Mammary epithelial cell (primary cell): ENCODE measurements at regions of chr9 and their contacts with region 1.

Region 1: DNA sequence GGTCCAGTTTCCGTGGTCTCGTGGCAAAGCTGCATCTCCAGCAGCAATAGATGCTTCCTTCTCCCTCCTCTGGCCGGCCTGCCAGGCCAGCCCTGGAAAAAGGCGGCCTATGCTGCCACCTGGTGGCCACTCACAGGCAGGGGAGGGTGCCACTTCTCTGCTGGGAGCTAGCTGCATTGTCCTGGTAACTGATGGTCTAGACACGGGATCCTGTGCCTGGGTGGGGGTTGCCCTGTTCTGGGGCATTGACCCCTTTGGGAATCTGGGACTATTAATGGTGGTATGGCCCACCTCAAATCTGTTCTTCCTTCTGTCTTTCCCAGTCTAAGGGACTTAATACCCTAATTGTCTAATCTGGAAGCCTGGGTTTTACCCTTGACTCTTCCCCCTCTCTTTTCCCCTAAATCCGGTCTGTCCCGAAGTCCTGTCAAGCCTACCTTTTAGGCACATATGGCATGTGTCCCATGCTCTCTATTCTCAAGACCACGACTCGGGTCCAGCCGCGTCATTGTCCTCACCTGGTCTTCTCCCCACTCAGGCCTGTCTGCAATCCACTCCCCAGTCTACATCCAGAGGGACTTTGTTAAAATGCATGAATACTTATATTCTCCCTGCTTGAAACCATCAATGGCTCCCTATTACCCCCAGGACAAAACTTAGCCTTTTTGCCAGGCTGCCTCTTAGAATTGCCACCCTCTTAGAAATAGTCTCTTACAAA is 20.0 kb upstream of the PTGS1 start:
- DNase-seq: peak; percentile 60
- H3K4me3 ChIP-seq: no peak overlapping the region
- H3K27ac ChIP-seq: no peak overlapping the region
- H3K4me1 ChIP-seq: peaks cover 13% of the 10 kb centered on the region
- H3K27me3 ChIP-seq: no peaks in the 10 kb centered on the region
- CTCF ChIP-seq: peak; percentile 94

Region 2: GRCh38 chr9:121538246-121538645 is 812.6 kb before region 1 on chr9:
- CTCF ChIA-PET with region 1: no interaction called
- dilution Hi-C with region 1: no loop called
- in situ Hi-C with region 1: no loop called
- intact Hi-C with region 1: loop called (anchors 5 kb)
- DNase-seq: no peak
- H3K4me3 ChIP-seq: no peak overlapping the region
- H3K27ac ChIP-seq: no peak overlapping the region
- H3K4me1 ChIP-seq: no peaks in the 10 kb centered on the region
- H3K27me3 ChIP-seq: no peaks in the 10 kb centered on the region
- CTCF ChIP-seq: peak; percentile 13 to 47

Region 3: GRCh38 chr9:122092611-122093506 is 257.9 kb before region 1 on chr9 and contains the start of gene TTLL11:
- CTCF ChIA-PET with region 1: no interaction called
- dilution Hi-C with region 1: loop called (anchors 5 kb)
- in situ Hi-C with region 1: no loop called
- intact Hi-C with region 1: loop called (anchors 1 kb)
- DNase-seq: peak; percentile 89
- H3K4me3 ChIP-seq: peak within 1 kb of the TSS; percentile 65 to 91 (median 74)
- H3K27ac ChIP-seq: peak within 1 kb of the TSS; percentile 10
- H3K4me1 ChIP-seq: peaks cover 13% of the 10 kb centered on the region
- H3K27me3 ChIP-seq: no peaks in the 10 kb centered on the region
- CTCF ChIP-seq: no peak
- total RNA-seq, gene TTLL11: 5.7 to 17.5 TPM

Region 4: DNA sequence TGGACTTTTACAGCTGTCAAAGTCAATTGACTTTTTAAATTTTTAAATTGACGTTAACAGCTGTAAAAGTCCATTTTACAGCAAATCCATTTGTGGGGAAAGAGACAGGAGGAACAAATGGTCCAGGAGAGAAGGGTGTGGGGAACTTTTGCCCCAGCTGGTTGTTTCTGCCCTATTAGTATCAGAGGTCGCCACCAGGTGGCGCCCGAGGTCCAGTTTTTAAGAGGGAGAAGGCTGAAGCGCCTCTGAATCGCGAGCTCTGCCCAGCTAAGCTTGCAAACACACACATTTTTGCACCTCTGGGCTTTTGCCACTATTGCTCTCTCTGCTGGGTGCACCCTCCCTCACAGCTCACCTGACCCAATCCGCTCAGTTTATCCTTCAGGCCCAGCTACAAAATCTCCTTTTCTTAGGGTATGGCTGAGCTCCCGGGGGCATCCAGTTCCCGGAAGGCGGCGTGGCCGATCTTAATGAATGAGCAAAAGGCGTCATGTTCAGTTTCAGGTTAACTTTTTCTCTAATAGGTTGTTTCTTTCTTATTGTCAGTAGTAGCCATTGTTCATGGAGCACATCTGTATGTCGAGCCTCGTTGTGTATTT is 251.4 kb before region 1 on chr9:
- CTCF ChIA-PET with region 1: interaction called, 8 read pairs
- dilution Hi-C with region 1: loop called (anchors 5 kb)
- in situ Hi-C with region 1: no loop called
- intact Hi-C with region 1: loop called (anchors 1 kb)
- DNase-seq: peak; percentile 54
- H3K4me3 ChIP-seq: peak overlapping the region in 2 of 3 experiments; percentile 1 to 17
- H3K27ac ChIP-seq: no peak overlapping the region
- H3K4me1 ChIP-seq: no peaks in the 10 kb centered on the region
- H3K27me3 ChIP-seq: no peaks in the 10 kb centered on the region
- CTCF ChIP-seq: peak; percentile 76 to 81

Region 5: DNA sequence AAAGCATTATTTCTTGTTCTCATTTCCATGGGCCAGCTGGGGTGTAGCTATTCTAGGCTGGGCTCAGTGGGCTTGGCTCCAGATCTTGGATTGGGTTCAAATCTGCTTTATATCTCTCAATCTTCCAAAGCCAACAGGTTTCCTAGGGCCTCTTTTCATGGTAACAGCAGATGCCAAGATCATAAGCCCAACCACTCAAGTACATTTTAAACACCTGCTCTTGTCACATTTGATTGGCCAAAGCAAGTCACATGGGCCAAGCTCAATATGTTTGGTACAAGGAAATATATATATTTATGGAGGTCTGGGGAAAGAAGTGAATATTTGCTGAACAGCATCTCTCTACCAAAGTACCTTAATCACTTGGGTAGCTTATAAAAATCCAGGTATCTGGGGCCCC is 36.6 kb before region 1 on chr9:
- CTCF ChIA-PET with region 1: no interaction called
- dilution Hi-C with region 1: loop called (anchors 5 kb)
- in situ Hi-C with region 1: no loop called
- intact Hi-C with region 1: no loop called
- DNase-seq: no peak
- H3K4me3 ChIP-seq: no peak overlapping the region
- H3K27ac ChIP-seq: no peak overlapping the region
- H3K4me1 ChIP-seq: no peaks in the 10 kb centered on the region
- H3K27me3 ChIP-seq: no peaks in the 10 kb centered on the region
- CTCF ChIP-seq: no peak

Region 6: GRCh38 chr9:122402403-122402871 is 51.6 kb after region 1 on chr9:
- CTCF ChIA-PET with region 1: no interaction called
- dilution Hi-C with region 1: no loop called
- in situ Hi-C with region 1: no loop called
- intact Hi-C with region 1: no loop called
- DNase-seq: peak; percentile 92
- H3K4me3 ChIP-seq: no peak overlapping the region
- H3K27ac ChIP-seq: peak overlapping the region; percentile 52
- H3K4me1 ChIP-seq: peaks cover 12% of the 10 kb centered on the region
- H3K27me3 ChIP-seq: no peaks in the 10 kb centered on the region
- CTCF ChIP-seq: no peak

Region 7: GRCh38 chr9:122453677-122454135 is 102.9 kb after region 1 on chr9:
- CTCF ChIA-PET with region 1: no interaction called
- dilution Hi-C with region 1: loop called (anchors 5 kb)
- in situ Hi-C with region 1: loop called in 1 of 2 experiments (anchors 10 kb)
- intact Hi-C with region 1: loop called (anchors 1 kb)
- DNase-seq: peak; percentile 3
- H3K4me3 ChIP-seq: no peak overlapping the region
- H3K27ac ChIP-seq: no peak overlapping the region
- H3K4me1 ChIP-seq: peaks cover 4% of the 10 kb centered on the region
- H3K27me3 ChIP-seq: no peaks in the 10 kb centered on the region
- CTCF ChIP-seq: no peak

Region 8: GRCh38 chr9:122810306-122810946 is 459.6 kb after region 1 on chr9:
- CTCF ChIA-PET with region 1: no interaction called
- dilution Hi-C with region 1: no loop called
- in situ Hi-C with region 1: no loop called
- intact Hi-C with region 1: loop called (anchors 1 kb)
- DNase-seq: peak; percentile 62
- H3K4me3 ChIP-seq: no peak overlapping the region
- H3K27ac ChIP-seq: no peak overlapping the region
- H3K4me1 ChIP-seq: peaks cover 1% of the 10 kb centered on the region
- H3K27me3 ChIP-seq: no peaks in the 10 kb centered on the region
- CTCF ChIP-seq: peak; percentile 62 to 72